ENCODE measurements at regions of chrX and their contacts with region 1.

Region 1: DNA sequence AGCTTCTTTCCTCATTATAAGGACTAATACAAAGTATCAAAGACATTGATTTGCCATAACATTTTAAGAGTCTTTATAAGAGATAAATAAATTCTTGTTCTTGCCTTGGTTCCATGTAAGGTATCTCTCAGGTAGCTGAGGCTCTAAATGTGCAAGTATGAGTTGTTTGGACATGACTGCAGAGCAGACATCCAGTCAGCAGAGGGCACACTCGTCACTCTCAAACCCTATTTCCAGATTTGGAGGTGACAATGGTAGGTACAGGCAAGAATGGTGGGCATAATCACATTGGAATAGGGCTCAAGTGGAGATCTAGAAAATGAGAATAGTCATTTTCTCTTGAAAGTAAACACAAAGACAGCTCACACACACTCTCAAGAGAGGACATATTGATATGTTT is 133.3 kb upstream of the ZIC3 start:
- DNase-seq: peak; percentile 34
- H3K4me3 Mint-ChIP-seq: no peak overlapping the region
- H3K27ac Mint-ChIP-seq: no peak overlapping the region
- H3K4me1 Mint-ChIP-seq: peaks cover 5% of the 10 kb centered on the region
- H3K27me3 Mint-ChIP-seq: peaks cover 22% of the 10 kb centered on the region

Region 2: GRCh38 chrX:137550665-137551261 is 118.2 kb after region 1 on chrX:
- CTCF ChIA-PET with region 1: interaction called, 3 read pairs
- intact Hi-C with region 1: loop called (anchors 2 kb)
- DNase-seq: no peak
- H3K4me3 Mint-ChIP-seq: peak overlapping the region; percentile 27
- H3K27ac Mint-ChIP-seq: no peak overlapping the region
- H3K4me1 Mint-ChIP-seq: peaks cover 11% of the 10 kb centered on the region
- H3K27me3 Mint-ChIP-seq: peaks cover 34% of the 10 kb centered on the region

Region 3: GRCh38 chrX:137565921-137566745 is 133.5 kb after region 1 on chrX and contains the start of gene ZIC3:
- CTCF ChIA-PET with region 1: no interaction called
- intact Hi-C with region 1: loop called (anchors 2 kb)
- DNase-seq: peak; percentile 31
- H3K4me3 Mint-ChIP-seq: peak within 1 kb of the TSS; percentile 52
- H3K27ac Mint-ChIP-seq: peak within 1 kb of the TSS; percentile 13
- H3K4me1 Mint-ChIP-seq: peaks cover 13% of the 10 kb centered on the region
- H3K27me3 Mint-ChIP-seq: peaks cover 49% of the 10 kb centered on the region
- total RNA-seq, gene ZIC3: not detected

Region 4: DNA sequence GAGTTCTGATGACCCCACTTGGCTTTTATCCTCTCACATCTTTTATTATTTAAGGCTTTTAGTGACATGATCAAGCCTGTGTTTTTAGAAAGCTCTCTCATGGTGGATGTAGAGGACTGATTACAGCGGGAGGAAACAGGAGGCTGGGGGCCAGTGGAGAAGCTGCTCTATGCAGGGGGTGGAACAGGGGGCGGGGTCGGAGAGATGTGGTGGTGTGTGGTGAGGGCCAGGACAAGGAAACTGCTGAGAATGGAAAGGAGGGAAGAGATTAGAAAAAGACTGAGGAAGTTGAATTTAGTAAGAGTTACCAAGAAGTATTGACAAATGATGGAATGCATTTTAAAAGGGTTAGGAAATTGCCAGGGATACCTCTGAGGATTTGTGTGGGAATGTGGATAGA is 425.5 kb after region 1 on chrX:
- CTCF ChIA-PET with region 1: no interaction called
- intact Hi-C with region 1: no loop called
- DNase-seq: no peak
- H3K4me3 Mint-ChIP-seq: no peak overlapping the region
- H3K27ac Mint-ChIP-seq: no peak overlapping the region
- H3K4me1 Mint-ChIP-seq: no peaks in the 10 kb centered on the region
- H3K27me3 Mint-ChIP-seq: peaks cover 6% of the 10 kb centered on the region

Region 5: GRCh38 chrX:137926090-137926489 is 493.5 kb after region 1 on chrX:
- CTCF ChIA-PET with region 1: no interaction called
- intact Hi-C with region 1: loop called (anchors 2 kb)
- DNase-seq: no peak
- H3K4me3 Mint-ChIP-seq: no peak overlapping the region
- H3K27ac Mint-ChIP-seq: no peak overlapping the region
- H3K4me1 Mint-ChIP-seq: no peaks in the 10 kb centered on the region
- H3K27me3 Mint-ChIP-seq: no peaks in the 10 kb centered on the region

Region 6: DNA sequence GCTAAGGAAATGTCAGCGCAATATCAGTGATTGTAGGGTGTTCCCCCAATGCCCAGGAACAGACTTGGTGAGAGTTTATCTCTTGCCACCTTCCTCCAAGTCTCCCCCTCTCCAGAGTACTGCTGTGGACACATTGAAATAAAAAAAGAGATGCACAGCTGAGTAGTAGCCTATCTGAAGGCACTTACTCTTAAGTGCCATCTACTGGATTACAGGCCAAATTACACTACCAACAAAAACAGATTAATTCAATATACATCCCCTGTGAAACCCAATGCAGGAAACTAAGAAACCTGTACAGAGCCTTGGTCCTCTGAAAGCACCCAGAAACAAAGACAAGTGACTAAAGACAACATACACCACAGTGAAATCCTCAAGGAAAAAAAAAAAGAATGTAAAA is 593.6 kb after region 1 on chrX:
- CTCF ChIA-PET with region 1: no interaction called
- intact Hi-C with region 1: loop called (anchors 2 kb)
- DNase-seq: no peak
- H3K4me3 Mint-ChIP-seq: no peak overlapping the region
- H3K27ac Mint-ChIP-seq: no peak overlapping the region
- H3K4me1 Mint-ChIP-seq: no peaks in the 10 kb centered on the region
- H3K27me3 Mint-ChIP-seq: peaks cover 9% of the 10 kb centered on the region

Region 7: GRCh38 chrX:138150709-138151108 is 718.1 kb after region 1 on chrX:
- CTCF ChIA-PET with region 1: no interaction called
- intact Hi-C with region 1: no loop called
- DNase-seq: no peak
- H3K4me3 Mint-ChIP-seq: no peak overlapping the region
- H3K27ac Mint-ChIP-seq: no peak overlapping the region
- H3K4me1 Mint-ChIP-seq: no peaks in the 10 kb centered on the region
- H3K27me3 Mint-ChIP-seq: no peaks in the 10 kb centered on the region

Measured in activated naive CD4-positive, alpha-beta T cell treated with anti-CD3 and anti-CD28 coated beads for 36 hours (primary cell).